Calu3 (cell line): ENCODE measurements at regions of chr17 and their contacts with region 1.

Region 1: GRCh38 chr17:76370261-76370993 is 14.0 kb upstream of the SPHK1 start:
- DNase-seq: peak; percentile 47
- H3K4me3 Mint-ChIP-seq: no peak overlapping the region
- H3K27ac Mint-ChIP-seq: no peak overlapping the region
- H3K4me1 Mint-ChIP-seq: peaks cover 9% of the 10 kb centered on the region
- H3K27me3 Mint-ChIP-seq: no peaks in the 10 kb centered on the region
- CTCF ChIP-seq: peak; percentile 72

Region 2: GRCh38 chr17:76264755-76265596 is 105.5 kb before region 1 on chr17 and contains the start of gene UBALD2:
- CTCF ChIA-PET with region 1: interaction called, 11 read pairs
- intact Hi-C with region 1: no loop called
- DNase-seq: peak; percentile 99
- H3K4me3 Mint-ChIP-seq: peak within 1 kb of the TSS; percentile 90
- H3K27ac Mint-ChIP-seq: peak within 1 kb of the TSS; percentile 93
- H3K4me1 Mint-ChIP-seq: peaks cover 50% of the 10 kb centered on the region
- H3K27me3 Mint-ChIP-seq: no peaks in the 10 kb centered on the region
- CTCF ChIP-seq: no peak
- total RNA-seq, gene UBALD2: 74.3 and 87.9 TPM in 2 replicates

Region 3: DNA sequence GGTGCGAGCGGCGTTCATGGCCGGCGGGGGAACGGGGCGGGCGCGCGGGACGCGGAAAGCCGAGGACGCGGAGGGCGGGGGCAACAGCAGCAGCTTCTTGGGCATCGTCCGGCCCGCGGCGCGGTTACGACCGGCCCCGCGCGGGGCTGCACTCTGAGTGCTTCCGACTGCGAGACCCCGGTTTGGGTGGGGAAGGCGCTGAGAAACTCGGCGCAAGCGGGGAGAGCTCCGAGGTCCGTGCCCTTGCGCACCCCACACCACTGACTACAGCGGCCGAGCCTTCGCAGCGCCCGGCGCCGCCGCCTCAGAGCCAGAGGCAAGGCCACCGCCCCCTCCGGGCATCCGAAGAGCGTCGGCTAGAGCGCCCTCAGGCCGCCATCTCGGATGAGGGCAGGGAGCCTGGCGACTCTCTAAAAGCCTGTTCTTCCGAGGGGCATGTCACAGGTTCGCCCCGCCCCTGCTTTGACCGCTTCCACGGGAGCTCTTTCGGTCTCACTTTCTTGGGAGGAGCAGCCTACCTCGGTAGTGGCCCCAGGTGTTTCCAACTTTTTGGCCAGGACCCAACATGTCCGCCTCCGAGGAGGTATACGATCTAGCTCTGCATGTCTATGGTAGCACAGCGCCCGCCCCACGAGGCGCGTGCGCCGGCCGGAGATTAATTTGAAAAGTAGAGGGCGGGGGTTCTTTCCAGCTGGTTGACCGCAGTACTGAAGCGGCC is 16.7 kb before region 1 on chr17 and contains the start of gene PRPSAP1:
- CTCF ChIA-PET with region 1: interaction called, 12 read pairs
- intact Hi-C with region 1: no loop called
- DNase-seq: peak; percentile 87
- H3K4me3 Mint-ChIP-seq: peak within 1 kb of the TSS; percentile 96
- H3K27ac Mint-ChIP-seq: peak within 1 kb of the TSS; percentile 98
- H3K4me1 Mint-ChIP-seq: peaks cover 30% of the 10 kb centered on the region
- H3K27me3 Mint-ChIP-seq: no peaks in the 10 kb centered on the region
- CTCF ChIP-seq: peak; percentile 49
- total RNA-seq, gene PRPSAP1: 41.2 and 42.6 TPM in 2 replicates

Region 4: DNA sequence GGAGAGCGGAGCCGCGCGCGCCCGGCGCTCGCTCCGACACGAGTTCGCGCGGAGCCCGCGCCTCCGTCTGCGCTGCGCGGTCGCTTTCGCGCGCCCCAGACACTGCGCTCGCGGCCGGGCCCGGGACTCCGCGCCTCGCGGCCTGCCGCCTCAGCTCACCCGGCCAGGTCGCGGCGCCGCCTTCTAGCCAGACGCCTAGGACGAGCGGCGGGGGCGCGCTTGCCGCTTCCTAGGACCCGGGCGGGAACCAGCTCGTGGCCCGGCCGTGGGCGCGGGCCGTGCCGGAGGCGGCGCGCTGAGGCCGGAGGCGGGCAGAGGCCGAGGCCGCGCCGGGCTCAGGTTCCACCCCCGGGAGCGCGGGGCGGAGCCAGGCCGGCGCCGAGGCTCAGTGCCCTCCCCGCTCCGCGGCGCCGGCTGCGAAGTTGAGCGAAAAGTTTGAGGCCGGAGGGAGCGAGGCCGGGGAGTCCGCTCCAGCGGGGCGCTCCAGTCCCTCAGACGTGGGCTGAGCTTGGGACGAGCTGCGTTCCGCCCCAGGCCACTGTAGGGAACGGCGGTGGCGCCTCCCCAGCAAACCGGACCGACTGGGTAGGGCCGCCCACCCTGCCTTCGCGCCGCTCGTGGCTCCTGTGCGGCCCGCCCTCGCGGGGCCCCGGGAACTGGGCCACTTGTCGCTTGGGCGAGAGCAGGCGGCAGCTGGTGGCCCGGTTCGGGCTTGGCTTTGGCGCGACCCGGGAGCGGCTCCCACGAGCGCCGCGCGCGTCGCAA is 14.0 kb after region 1 on chr17 and contains the start of gene SPHK1:
- CTCF ChIA-PET with region 1: interaction called, 12 read pairs
- intact Hi-C with region 1: no loop called
- DNase-seq: peak; percentile 78
- H3K4me3 Mint-ChIP-seq: peak within 1 kb of the TSS; percentile 71
- H3K27ac Mint-ChIP-seq: no peak within 1 kb of the TSS
- H3K4me1 Mint-ChIP-seq: no peaks in the 10 kb centered on the region
- H3K27me3 Mint-ChIP-seq: peaks cover 14% of the 10 kb centered on the region
- CTCF ChIP-seq: no peak
- total RNA-seq, gene SPHK1: 1.5 and 1.7 TPM in 2 replicates